CD8-positive, alpha-beta memory T cell (primary cell): ENCODE measurements at regions of chr15 and their contacts with region 1.

Region 1: DNA sequence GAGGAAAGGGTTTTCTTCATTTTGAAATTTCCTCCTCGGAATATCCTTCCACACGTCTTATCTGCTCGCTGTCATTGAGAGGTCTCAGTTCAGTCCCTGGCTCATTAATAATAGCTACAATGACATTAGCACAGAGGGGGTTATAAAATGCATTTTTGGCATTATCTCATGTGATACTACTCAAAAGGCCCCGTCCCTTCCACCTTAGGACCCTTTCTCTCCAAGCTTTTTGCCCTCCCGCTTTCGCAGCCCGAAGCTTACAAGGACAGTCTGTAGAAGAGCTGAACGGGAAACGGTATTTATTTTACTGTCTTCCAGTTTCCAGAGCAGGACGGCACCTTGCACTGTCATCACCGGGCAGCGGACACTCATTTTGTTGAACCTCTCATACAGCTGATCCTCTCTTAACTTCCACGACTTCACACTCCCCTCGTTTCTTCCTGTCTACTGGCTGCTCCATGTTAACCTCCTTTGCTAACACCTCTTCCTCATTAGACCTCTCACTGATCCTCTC is 5.6 kb upstream of the PLEKHO2 start:
- DNase-seq: no peak
- H3K4me3 ChIP-seq: no peak overlapping the region
- H3K4me3 Mint-ChIP-seq: peak overlapping the region; percentile 11 to 70 (median 52)
- H3K27ac ChIP-seq: no peak overlapping the region
- H3K27ac Mint-ChIP-seq: peak overlapping the region; percentile 1 to 88 (median 78)
- H3K4me1 ChIP-seq: peaks cover 53% of the 10 kb centered on the region
- H3K4me1 Mint-ChIP-seq: peaks cover 45 to 54% (median 51%) of the 10 kb centered on the region in 3 donors
- H3K27me3 ChIP-seq: no peaks in the 10 kb centered on the region
- H3K27me3 Mint-ChIP-seq: peaks cover 0 to 1% of the 10 kb centered on the region in 2 donors

Region 2: GRCh38 chr15:64717735-64718495 is 118.2 kb before region 1 on chr15:
- CTCF ChIA-PET with region 1: no interaction called
- POLR2A ChIA-PET with region 1: no interaction called
- DNase-seq: peak in 1 of 5 donors; percentile 27
- H3K4me3 ChIP-seq: no peak overlapping the region
- H3K4me3 Mint-ChIP-seq: no peak overlapping the region
- H3K27ac ChIP-seq: no peak overlapping the region
- H3K27ac Mint-ChIP-seq: peak overlapping the region in 1 of 8 donors; percentile 38
- H3K4me1 ChIP-seq: peaks cover 15% of the 10 kb centered on the region
- H3K4me1 Mint-ChIP-seq: peaks cover 0 to 13% (median 0%) of the 10 kb centered on the region in 3 donors
- H3K27me3 ChIP-seq: no peaks in the 10 kb centered on the region
- H3K27me3 Mint-ChIP-seq: no peaks in the 10 kb centered on the region

Region 3: GRCh38 chr15:64809649-64810496 is 26.2 kb before region 1 on chr15:
- CTCF ChIA-PET with region 1: interaction called, 26 read pairs
- POLR2A ChIA-PET with region 1: no interaction called
- DNase-seq: peak; percentile 42 to 76 (median 56)
- H3K4me3 ChIP-seq: no peak overlapping the region
- H3K4me3 Mint-ChIP-seq: no peak overlapping the region
- H3K27ac ChIP-seq: no peak overlapping the region
- H3K27ac Mint-ChIP-seq: no peak overlapping the region
- H3K4me1 ChIP-seq: no peaks in the 10 kb centered on the region
- H3K4me1 Mint-ChIP-seq: peaks cover 3 to 6% (median 5%) of the 10 kb centered on the region in 3 donors
- H3K27me3 ChIP-seq: no peaks in the 10 kb centered on the region
- H3K27me3 Mint-ChIP-seq: peaks cover 3 to 6% of the 10 kb centered on the region in 2 donors

Region 4: DNA sequence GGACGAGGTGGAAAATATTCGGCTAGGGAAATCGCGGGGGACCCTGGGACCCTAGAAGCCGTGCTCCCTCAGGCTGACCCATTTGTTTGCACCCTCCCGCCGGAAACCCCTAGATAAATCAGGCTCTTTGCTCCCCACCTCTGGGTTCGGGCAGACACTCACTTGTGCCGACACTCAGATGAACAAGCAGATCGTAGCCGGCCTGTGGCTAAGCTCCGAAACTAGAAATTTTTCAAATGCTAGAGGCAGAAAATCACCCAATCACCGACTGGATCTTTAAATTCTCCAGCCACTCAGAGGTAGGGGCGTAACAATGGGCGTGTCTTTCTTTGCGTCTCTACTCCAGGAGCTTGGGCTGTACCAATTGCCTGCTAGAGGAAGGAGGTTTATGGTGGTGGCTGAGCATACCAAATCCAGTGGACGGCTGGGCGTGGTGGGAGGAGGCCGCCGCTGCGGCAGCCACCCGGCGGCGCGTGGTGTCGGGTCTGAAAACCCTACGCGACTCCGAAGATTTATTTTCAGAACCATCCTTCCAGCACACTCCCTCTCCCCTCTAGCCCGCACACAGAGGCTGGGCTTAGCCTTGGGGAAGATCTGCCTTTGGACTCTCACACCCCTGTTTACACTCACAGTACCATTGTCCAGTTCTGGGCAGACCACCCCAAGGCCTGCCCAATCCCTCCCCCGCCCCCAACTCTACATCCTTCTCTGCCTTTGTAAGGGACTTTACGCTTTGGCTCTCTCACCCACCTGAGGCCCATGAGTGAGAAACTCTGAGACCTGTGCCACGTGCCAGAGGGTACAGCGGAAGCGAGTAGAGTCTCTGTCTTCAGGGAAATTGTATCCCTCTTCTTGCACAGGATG is 10.4 kb before region 1 on chr15 and contains the start of gene PIF1:
- CTCF ChIA-PET with region 1: interaction called, 38 read pairs
- POLR2A ChIA-PET with region 1: interaction called, 13 read pairs
- DNase-seq: peak; percentile 80 to 91 (median 88)
- H3K4me3 ChIP-seq: peak within 1 kb of the TSS; percentile 85
- H3K4me3 Mint-ChIP-seq: peak within 1 kb of the TSS; percentile 79 to 92 (median 89)
- H3K27ac ChIP-seq: peak within 1 kb of the TSS; percentile 51
- H3K27ac Mint-ChIP-seq: peak within 1 kb of the TSS; percentile 19 to 97 (median 82)
- H3K4me1 ChIP-seq: peaks cover 26% of the 10 kb centered on the region
- H3K4me1 Mint-ChIP-seq: peaks cover 27 to 34% (median 33%) of the 10 kb centered on the region in 3 donors
- H3K27me3 ChIP-seq: no peaks in the 10 kb centered on the region
- H3K27me3 Mint-ChIP-seq: peaks cover 0 to 10% of the 10 kb centered on the region in 2 donors
- total RNA-seq, gene PIF1: 14.6 to 14.7 TPM

Region 5: GRCh38 chr15:64883997-64884511 is 48.0 kb after region 1 on chr15:
- CTCF ChIA-PET with region 1: interaction called, 28 read pairs
- POLR2A ChIA-PET with region 1: no interaction called
- DNase-seq: peak; percentile 55 to 78 (median 70)
- H3K4me3 ChIP-seq: no peak overlapping the region
- H3K4me3 Mint-ChIP-seq: peak overlapping the region in 5 of 7 donors; percentile 64 to 84 (median 74)
- H3K27ac ChIP-seq: no peak overlapping the region
- H3K27ac Mint-ChIP-seq: peak overlapping the region; percentile 48 to 97 (median 82)
- H3K4me1 ChIP-seq: peaks cover 36% of the 10 kb centered on the region
- H3K4me1 Mint-ChIP-seq: peaks cover 33 to 36% (median 34%) of the 10 kb centered on the region in 3 donors
- H3K27me3 ChIP-seq: no peaks in the 10 kb centered on the region
- H3K27me3 Mint-ChIP-seq: no peaks in the 10 kb centered on the region

Region 6: GRCh38 chr15:64905119-64905831 is 69.2 kb after region 1 on chr15:
- CTCF ChIA-PET with region 1: interaction called, 16 read pairs
- POLR2A ChIA-PET with region 1: no interaction called
- DNase-seq: peak; percentile 64 to 84 (median 70)
- H3K4me3 ChIP-seq: peak overlapping the region; percentile 50
- H3K4me3 Mint-ChIP-seq: peak overlapping the region in 6 of 7 donors; percentile 28 to 71 (median 57)
- H3K27ac ChIP-seq: no peak overlapping the region
- H3K27ac Mint-ChIP-seq: peak overlapping the region in 5 of 8 donors; percentile 20 to 66 (median 57)
- H3K4me1 ChIP-seq: peaks cover 29% of the 10 kb centered on the region
- H3K4me1 Mint-ChIP-seq: peaks cover 35 to 46% (median 44%) of the 10 kb centered on the region in 3 donors
- H3K27me3 ChIP-seq: no peaks in the 10 kb centered on the region
- H3K27me3 Mint-ChIP-seq: peaks cover 0 to 2% of the 10 kb centered on the region in 2 donors